Posterior cingulate gyrus (tissue), 11 donors: ENCODE measurements at regions of chr6 and their contacts with region 1.

Region 1: DNA sequence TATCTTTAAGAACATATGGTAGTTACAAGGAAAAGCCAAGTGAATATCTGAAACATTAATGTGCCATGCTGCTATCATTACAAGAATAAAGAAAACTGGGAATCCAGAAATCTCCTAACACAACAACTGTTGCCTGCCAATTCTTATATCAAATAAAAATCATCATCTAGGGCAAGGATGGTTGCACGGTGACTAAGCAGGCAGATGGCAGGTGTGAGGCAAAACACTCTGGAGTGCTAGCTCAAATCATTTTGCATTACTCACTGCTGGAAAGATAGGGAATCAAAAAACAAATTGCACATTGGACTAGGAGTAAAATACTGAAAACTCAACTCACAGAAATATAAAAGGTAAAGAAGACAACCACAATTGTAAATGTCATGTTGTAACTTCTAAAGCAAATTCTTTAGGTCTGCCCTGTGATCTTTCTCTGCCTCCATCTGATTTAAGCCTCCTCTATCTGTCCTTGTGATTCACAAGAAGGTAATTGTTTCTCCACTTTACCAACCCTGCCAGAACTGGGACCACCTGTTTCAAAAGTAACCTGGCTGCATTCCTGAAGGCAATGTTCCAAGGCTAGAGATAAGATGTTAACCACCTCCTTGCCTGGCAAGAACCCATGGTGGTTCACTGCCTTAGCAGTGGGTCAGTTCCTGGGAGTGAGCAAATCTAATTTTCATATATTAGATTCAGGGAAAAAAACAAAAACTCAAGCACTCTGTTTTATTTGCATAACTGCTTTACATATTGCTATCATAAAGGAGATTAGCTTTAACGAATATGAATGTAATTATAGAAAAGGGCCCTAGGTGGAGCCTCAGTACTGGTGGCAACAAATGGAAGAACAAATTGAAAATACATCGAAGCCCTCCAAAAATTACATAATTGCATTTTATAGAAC is 33.1 kb upstream of the LCA5 start:
- DNase-seq: peak in 7 of 10 donors; percentile 24 to 82 (median 43)

Region 2: DNA sequence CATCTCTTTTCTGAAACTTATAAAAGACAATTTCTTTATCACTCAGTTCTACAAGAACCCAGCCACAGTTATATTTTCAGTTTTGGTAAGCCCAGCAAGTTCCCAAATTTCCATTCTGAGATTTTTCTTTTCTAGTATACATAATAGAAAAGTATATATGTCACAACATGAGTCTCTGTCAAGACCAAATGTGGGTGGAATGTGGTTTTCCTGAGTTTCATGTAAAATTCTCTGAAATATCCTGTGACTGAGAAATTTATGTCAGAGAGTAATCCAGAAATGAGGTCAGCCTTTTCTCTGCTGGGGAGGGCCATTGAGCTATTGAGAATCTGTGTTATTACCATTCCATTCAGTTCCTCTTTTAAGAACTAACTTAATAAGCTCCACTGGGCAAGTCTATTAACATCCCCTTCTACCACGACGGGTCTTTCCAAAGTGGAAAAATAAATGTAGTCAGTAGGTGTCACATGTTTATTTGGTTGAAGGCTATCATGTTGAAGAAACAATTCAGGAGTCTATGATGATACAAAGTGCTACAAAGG is 235.2 kb before region 1 on chr6:
- intact Hi-C with region 1: no loop called
- DNase-seq: no peak

Region 3: DNA sequence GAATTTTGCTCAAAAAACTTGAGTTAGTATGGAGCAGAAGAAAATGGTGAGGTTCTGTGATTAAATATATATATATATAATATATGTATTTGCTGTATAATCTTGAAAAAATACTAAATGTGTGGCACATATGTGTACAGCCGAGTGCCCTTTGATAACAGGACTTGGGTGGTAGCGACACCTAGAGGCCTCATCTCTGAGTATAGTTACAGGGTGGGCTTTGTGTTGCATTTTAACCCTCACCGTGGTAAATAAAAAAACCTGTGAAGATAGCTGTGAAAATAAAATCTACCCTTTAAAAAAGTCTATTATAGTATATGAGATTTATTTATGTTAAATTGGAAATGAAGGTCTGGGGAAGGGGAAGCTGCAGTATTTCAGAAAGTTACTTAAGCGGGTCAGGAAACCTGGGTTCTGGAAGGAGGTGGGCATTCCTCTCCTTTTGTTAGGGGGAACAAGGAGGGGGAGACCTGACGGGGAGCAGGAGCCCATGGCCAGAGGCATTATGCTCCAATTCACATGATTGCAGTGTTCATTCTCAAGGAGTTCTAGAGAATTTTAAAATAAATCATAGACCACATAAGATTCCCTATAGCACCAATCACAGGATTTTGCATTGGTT is 143.4 kb after region 1 on chr6:
- intact Hi-C with region 1: loop called (anchors 2 kb)
- DNase-seq: peak in 5 of 10 donors; percentile 40 to 79 (median 51)

Region 4: GRCh38 chr6:79813854-79814709 is 243.7 kb after region 1 on chr6:
- intact Hi-C with region 1: loop called (anchors 5 kb)
- DNase-seq: peak; percentile 34 to 94 (median 80)